ENCODE measurements at regions of chr7 and their contacts with region 1.

Region 1: GRCh38 chr7:3154912-3155494 is 111.3 kb upstream of the CARD11 start:
- DNase-seq: peak; percentile 64 to 74 (median 66)
- H3K4me3 ChIP-seq: no peak overlapping the region
- H3K4me3 Mint-ChIP-seq: no peak overlapping the region
- H3K27ac ChIP-seq: no peak overlapping the region
- H3K27ac Mint-ChIP-seq: peak overlapping the region in 2 of 7 donors; percentile 1 to 13
- H3K4me1 ChIP-seq: no peaks in the 10 kb centered on the region
- H3K4me1 Mint-ChIP-seq: peaks cover 6 to 18% (median 8%) of the 10 kb centered on the region in 4 donors
- H3K27me3 ChIP-seq: no peaks in the 10 kb centered on the region
- H3K27me3 Mint-ChIP-seq: peaks cover 0 to 1% of the 10 kb centered on the region in 2 donors

Region 2: DNA sequence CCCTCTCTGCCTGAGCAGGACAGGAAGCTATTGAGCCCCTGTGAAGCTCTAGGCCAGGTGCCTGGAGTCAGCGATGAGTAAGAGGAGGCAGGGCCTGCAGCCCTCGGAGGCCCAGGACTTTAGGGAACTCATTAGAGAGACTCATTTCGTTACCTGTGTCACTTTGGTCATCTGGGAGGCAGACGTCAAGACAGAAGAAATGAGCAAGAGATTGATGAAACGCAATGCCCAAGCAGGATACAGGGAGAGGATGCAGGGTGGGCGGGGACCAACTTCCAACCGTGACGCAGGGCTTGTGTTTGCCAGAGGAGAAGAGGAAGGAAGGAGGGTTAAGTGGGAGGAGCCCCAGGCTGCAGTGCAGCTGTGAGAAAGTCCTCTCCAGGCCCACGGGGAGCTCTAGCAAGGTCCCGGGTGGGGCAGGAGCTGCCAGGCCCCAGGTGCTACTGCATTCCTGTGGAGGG is 284.5 kb before region 1 on chr7:
- CTCF ChIA-PET with region 1: interaction called, 49 read pairs
- POLR2A ChIA-PET with region 1: no interaction called
- intact Hi-C with region 1: loop called (anchors 1 kb)
- DNase-seq: peak; percentile 50 to 75 (median 57)
- H3K4me3 ChIP-seq: peak overlapping the region; percentile 50 to 52
- H3K4me3 Mint-ChIP-seq: peak overlapping the region; percentile 78 to 89 (median 86)
- H3K27ac ChIP-seq: peak overlapping the region; percentile 45
- H3K27ac Mint-ChIP-seq: peak overlapping the region; percentile 66 to 86 (median 76)
- H3K4me1 ChIP-seq: peaks cover 36% of the 10 kb centered on the region
- H3K4me1 Mint-ChIP-seq: peaks cover 27 to 46% (median 36%) of the 10 kb centered on the region in 4 donors
- H3K27me3 ChIP-seq: no peaks in the 10 kb centered on the region
- H3K27me3 Mint-ChIP-seq: no peaks in the 10 kb centered on the region

Region 3: DNA sequence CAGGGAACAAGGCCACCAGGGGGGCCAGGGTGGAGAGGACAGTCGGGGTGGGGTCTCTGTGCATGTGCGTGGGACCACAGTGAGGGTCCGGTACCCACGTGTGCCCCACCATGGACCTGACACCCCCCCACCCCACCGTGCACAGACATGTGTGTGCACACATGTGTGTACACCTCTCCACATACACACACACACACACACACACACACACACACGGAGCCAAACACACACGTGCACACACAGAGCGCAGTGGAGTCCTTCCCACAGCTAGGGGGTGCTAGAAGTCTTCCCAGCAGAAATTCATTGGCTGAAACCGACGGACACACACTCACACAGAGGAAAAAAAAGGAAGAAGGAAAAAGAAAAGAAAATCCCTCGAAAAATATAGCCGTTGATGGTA is 268.1 kb before region 1 on chr7:
- CTCF ChIA-PET with region 1: interaction called, 13 read pairs
- POLR2A ChIA-PET with region 1: no interaction called
- intact Hi-C with region 1: loop called (anchors 1 kb)
- DNase-seq: peak; percentile 49 to 65 (median 50)
- H3K4me3 ChIP-seq: no peak overlapping the region
- H3K4me3 Mint-ChIP-seq: no peak overlapping the region
- H3K27ac ChIP-seq: no peak overlapping the region
- H3K27ac Mint-ChIP-seq: peak overlapping the region in 2 of 7 donors; percentile 1 to 2
- H3K4me1 ChIP-seq: no peaks in the 10 kb centered on the region
- H3K4me1 Mint-ChIP-seq: peaks cover 3 to 7% (median 4%) of the 10 kb centered on the region in 4 donors
- H3K27me3 ChIP-seq: no peaks in the 10 kb centered on the region
- H3K27me3 Mint-ChIP-seq: no peaks in the 10 kb centered on the region

Region 4: GRCh38 chr7:2956526-2957368 is 198.3 kb before region 1 on chr7:
- CTCF ChIA-PET with region 1: interaction called, 3 read pairs
- POLR2A ChIA-PET with region 1: no interaction called
- intact Hi-C with region 1: loop called (anchors 10 kb)
- DNase-seq: peak in 1 of 5 donors; percentile 61
- H3K4me3 ChIP-seq: no peak overlapping the region
- H3K4me3 Mint-ChIP-seq: no peak overlapping the region
- H3K27ac ChIP-seq: no peak overlapping the region
- H3K27ac Mint-ChIP-seq: peak overlapping the region in 6 of 7 donors; percentile 21 to 84 (median 59)
- H3K4me1 ChIP-seq: peaks cover 60% of the 10 kb centered on the region
- H3K4me1 Mint-ChIP-seq: peaks cover 32 to 75% (median 54%) of the 10 kb centered on the region in 4 donors
- H3K27me3 ChIP-seq: no peaks in the 10 kb centered on the region
- H3K27me3 Mint-ChIP-seq: no peaks in the 10 kb centered on the region

Region 5: DNA sequence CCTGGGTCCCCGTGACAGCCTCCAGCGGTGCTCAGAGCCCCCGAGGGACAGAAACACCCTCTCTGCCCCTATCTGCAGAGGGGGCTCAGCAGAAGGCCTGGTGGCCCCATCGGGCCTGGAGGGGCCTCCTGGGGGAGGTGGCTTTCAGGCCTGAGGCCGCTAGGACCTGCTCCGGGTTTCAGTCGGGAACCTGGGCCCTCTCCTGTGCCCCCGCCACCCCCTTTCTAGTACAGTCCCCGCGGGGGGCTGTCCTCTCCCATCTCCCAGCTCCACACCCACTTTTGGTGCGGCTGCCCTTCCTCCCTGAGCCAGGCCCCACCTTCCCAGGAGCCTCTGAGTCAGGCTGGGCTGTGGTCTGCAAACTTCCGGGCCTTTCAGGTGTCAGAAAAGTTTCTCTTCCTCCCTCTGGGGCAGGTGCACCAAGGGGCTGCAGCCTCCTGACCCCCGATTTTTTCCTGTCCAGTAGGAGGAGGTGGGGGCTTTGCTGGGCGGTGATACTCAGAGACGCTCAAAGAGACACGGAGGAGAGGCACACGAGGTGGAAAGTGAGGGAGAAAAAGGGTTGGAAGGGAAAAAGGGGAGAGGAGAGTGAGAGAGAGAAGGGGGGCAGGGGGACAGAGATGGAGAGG is 112.0 kb before region 1 on chr7:
- CTCF ChIA-PET with region 1: interaction called, 8 read pairs
- POLR2A ChIA-PET with region 1: no interaction called
- intact Hi-C with region 1: loop called (anchors 1 kb)
- DNase-seq: peak; percentile 55 to 87 (median 64)
- H3K4me3 ChIP-seq: peak overlapping the region; percentile 66 to 84
- H3K4me3 Mint-ChIP-seq: peak overlapping the region; percentile 92 to 97 (median 96)
- H3K27ac ChIP-seq: peak overlapping the region; percentile 93
- H3K27ac Mint-ChIP-seq: peak overlapping the region; percentile 90 to 97 (median 95)
- H3K4me1 ChIP-seq: peaks cover 60% of the 10 kb centered on the region
- H3K4me1 Mint-ChIP-seq: peaks cover 36 to 72% (median 50%) of the 10 kb centered on the region in 4 donors
- H3K27me3 ChIP-seq: no peaks in the 10 kb centered on the region
- H3K27me3 Mint-ChIP-seq: no peaks in the 10 kb centered on the region

Measured in CD4-positive, alpha-beta memory T cell (primary cell).